ENCODE measurements at regions of chr12 and their contacts with region 1.

Region 1: GRCh38 chr12:9750276-9751203 is 10.2 kb downstream of the CD69 start:
- DNase-seq: peak; percentile 63
- H3K4me3 Mint-ChIP-seq: peak overlapping the region; percentile 50
- H3K27ac Mint-ChIP-seq: peak overlapping the region; percentile 83
- H3K4me1 Mint-ChIP-seq: peaks cover 51% of the 10 kb centered on the region
- H3K27me3 Mint-ChIP-seq: no peaks in the 10 kb centered on the region

Region 2: GRCh38 chr12:9391815-9392214 is 358.7 kb before region 1 on chr12:
- CTCF ChIA-PET with region 1: no interaction called
- POLR2A ChIA-PET with region 1: no interaction called
- intact Hi-C with region 1: no loop called
- DNase-seq: no peak
- H3K4me3 Mint-ChIP-seq: no peak overlapping the region
- H3K27ac Mint-ChIP-seq: no peak overlapping the region
- H3K4me1 Mint-ChIP-seq: peaks cover 10% of the 10 kb centered on the region
- H3K27me3 Mint-ChIP-seq: no peaks in the 10 kb centered on the region

Region 3: DNA sequence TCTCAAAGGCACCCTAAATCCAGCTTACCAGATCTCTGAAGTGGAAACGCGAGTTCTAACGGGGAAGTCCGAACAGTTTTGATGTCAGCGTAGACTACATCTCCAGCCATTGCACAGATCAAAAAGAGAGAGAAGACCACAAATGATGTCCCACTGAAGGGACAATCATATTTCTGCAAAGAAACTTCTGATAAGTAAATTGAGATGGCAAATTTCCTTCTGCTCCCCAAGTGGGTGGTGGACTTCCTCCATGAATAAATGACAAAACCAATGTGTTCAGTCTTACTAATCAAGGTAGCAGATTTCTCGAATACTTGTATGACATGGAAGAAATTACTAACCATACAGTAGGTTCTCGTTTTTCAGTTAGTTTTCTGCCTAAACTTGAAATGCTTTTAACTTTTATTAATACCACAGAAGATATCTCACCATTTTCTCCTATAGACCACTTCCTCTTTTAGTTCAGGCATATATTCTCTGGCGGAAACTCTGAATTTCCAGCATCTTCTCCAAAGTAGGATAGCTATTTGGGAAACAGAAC is 17.5 kb before region 1 on chr12 and contains the start of gene CLECL1:
- CTCF ChIA-PET with region 1: interaction called, 10 read pairs
- POLR2A ChIA-PET with region 1: interaction called, 4 read pairs
- intact Hi-C with region 1: no loop called
- DNase-seq: no peak
- H3K4me3 Mint-ChIP-seq: peak within 1 kb of the TSS; percentile 83
- H3K27ac Mint-ChIP-seq: peak within 1 kb of the TSS; percentile 93
- H3K4me1 Mint-ChIP-seq: peaks cover 50% of the 10 kb centered on the region
- H3K27me3 Mint-ChIP-seq: no peaks in the 10 kb centered on the region
- total RNA-seq, gene CLECL1: 6.5 to 7.4 TPM

Region 4: GRCh38 chr12:9797722-9798619 is 47.4 kb after region 1 on chr12:
- CTCF ChIA-PET with region 1: interaction called, 624 read pairs
- POLR2A ChIA-PET with region 1: interaction called, 180 read pairs
- intact Hi-C with region 1: loop called (anchors 1 kb)
- DNase-seq: peak; percentile 77
- H3K4me3 Mint-ChIP-seq: no peak overlapping the region
- H3K27ac Mint-ChIP-seq: peak overlapping the region; percentile 54
- H3K4me1 Mint-ChIP-seq: peaks cover 44% of the 10 kb centered on the region
- H3K27me3 Mint-ChIP-seq: no peaks in the 10 kb centered on the region

Region 5: GRCh38 chr12:9906873-9907272 is 156.3 kb after region 1 on chr12:
- CTCF ChIA-PET with region 1: interaction called, 12 read pairs
- POLR2A ChIA-PET with region 1: no interaction called
- intact Hi-C with region 1: no loop called
- DNase-seq: peak; percentile 24
- H3K4me3 Mint-ChIP-seq: no peak overlapping the region
- H3K27ac Mint-ChIP-seq: peak overlapping the region; percentile 39
- H3K4me1 Mint-ChIP-seq: peaks cover 19% of the 10 kb centered on the region
- H3K27me3 Mint-ChIP-seq: no peaks in the 10 kb centered on the region

Region 6: GRCh38 chr12:10031771-10032175 is 281.2 kb after region 1 on chr12:
- CTCF ChIA-PET with region 1: no interaction called
- POLR2A ChIA-PET with region 1: no interaction called
- intact Hi-C with region 1: no loop called
- DNase-seq: no peak
- H3K4me3 Mint-ChIP-seq: no peak overlapping the region
- H3K27ac Mint-ChIP-seq: no peak overlapping the region
- H3K4me1 Mint-ChIP-seq: no peaks in the 10 kb centered on the region
- H3K27me3 Mint-ChIP-seq: no peaks in the 10 kb centered on the region

Region 7: DNA sequence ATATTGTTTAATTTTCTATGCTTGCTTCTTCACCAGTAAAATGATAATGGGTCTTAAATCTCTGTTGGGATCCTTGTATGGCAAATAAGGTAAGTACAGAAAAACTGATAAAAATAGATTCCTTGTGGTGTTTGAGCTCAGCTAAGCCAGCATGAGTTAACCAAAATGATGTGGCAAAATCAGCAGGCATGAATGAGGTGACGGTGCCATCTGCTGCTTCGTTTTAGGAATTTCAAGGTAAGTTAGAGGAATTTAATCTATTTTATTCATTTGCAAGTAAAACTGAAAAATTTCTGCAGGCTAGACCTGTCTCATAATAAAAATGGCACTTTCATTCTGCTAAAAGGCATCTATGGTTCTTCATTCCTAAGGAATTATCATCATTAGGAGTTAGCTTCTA is 389.5 kb after region 1 on chr12:
- CTCF ChIA-PET with region 1: interaction called, 35 read pairs
- POLR2A ChIA-PET with region 1: no interaction called
- intact Hi-C with region 1: loop called (anchors 1 kb)
- DNase-seq: peak; percentile 66
- H3K4me3 Mint-ChIP-seq: no peak overlapping the region
- H3K27ac Mint-ChIP-seq: no peak overlapping the region
- H3K4me1 Mint-ChIP-seq: no peaks in the 10 kb centered on the region
- H3K27me3 Mint-ChIP-seq: peaks cover 8% of the 10 kb centered on the region

Measured in activated CD4-positive, alpha-beta memory T cell treated with anti-CD3 and anti-CD28 coated beads for 36 hours (primary cell).